ENCODE measurements at regions of chr14 and their contacts with region 1.

Region 1: DNA sequence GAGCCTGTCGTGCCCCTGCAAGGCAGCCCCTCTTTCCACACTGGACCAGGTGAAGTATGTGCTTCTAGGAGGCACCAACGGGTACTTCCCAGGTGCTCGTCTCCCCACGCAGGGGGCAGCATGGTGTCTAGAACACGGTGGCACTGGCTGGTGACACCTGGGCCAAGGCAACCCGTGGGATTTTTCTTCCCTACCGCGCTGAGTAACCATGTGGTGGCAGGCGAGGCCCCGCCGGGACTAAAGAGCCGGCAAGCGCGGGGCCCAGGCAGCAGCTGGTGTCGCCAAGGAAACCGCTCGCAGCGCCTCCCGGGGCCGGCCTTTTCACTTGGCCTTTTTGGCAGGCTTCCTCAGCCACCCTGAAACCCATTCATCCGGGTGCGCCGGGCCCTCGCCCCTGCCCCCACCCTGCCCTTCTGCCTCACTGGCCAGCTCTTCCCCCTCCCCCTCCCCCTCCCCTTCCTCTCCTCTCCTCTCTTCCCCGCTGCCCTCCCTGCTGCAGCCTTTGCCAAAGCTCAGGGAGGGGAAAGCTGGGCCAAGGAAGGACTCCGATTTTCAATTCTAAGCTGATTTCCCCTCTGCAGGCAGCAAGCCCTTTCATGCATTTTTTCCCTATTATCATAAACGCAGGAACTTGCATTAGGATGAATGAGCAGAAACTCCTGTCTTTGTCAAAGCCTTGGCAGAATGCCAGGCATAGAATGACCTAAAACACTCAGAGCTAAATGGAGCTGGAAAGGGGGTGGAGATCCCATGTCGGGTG is 81.2 kb downstream of the IRF2BPL start:
- DNase-seq: peak; percentile 98
- H3K4me3 ChIP-seq: peak overlapping the region; percentile 21
- H3K27ac ChIP-seq: peak overlapping the region; percentile 98
- H3K4me1 ChIP-seq: peaks cover 47% of the 10 kb centered on the region
- H3K27me3 ChIP-seq: no peaks in the 10 kb centered on the region
- CTCF ChIP-seq: peak; percentile 60

Region 2: DNA sequence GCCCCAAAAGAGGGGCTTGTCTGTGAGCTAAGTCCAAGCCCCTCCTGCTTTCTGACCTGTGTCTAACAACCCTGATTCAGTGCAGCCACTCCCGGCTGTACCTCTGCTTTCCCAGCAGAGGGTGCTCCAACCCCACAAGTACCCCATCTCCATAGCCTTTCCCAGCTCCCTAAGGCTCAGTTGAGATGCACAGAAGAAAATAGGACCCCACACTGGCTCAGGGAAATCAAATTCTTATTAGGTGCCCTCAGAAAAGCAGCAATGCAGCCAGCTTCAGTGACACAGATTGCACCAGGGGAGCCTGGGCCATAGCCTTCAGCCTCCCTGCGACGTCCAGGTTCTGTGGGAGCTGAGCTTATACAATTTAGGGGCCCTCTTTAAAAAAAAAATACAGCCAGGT is 71.2 kb before region 1 on chr14:
- CTCF ChIA-PET with region 1: no interaction called
- POLR2A ChIA-PET with region 1: no interaction called
- intact Hi-C with region 1: no loop called
- DNase-seq: peak; percentile 83
- H3K4me3 ChIP-seq: no peak overlapping the region
- H3K27ac ChIP-seq: no peak overlapping the region
- H3K4me1 ChIP-seq: no peaks in the 10 kb centered on the region
- H3K27me3 ChIP-seq: no peaks in the 10 kb centered on the region
- CTCF ChIP-seq: peak; percentile 96

Region 3: DNA sequence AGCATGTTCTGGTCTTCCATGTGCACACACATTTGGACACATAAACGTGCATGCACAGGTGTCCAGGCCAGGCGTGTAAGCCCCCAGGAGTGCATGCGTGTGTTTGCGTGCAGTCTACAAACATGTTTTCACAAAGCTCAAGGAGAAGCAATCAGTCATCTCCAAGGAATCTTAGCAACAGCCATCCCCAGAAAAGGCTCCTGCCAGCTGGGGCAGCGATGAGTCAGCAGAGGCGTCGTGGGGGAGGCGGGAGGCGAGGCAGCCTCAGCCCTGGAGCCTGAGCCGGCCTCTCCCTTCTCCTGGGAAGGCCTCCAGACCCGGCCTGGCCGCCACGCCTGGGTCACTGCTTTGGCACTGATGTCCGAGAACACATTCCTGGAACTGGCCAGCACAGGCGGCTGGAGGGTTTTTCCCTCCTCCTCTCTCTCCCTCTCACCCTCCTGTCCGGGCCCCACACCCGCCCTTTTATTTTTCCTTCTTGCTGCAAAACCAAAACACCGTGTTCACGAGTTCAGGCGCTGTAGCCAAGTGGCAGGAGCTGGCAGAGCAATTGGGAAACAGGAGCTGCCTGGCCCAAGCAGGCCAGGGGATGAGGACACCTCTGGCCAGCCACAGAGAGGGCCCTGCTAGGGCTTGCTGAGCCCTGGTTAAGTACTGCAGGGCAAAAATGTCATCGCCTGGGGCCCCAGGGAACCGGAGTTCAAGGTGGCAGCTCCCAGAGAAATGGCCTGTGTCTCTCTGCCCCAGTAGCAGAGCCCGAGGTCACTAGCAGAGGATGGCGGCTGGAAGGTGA is 28.3 kb before region 1 on chr14:
- CTCF ChIA-PET with region 1: interaction called, 7 read pairs
- POLR2A ChIA-PET with region 1: no interaction called
- intact Hi-C with region 1: loop called (anchors 2 kb)
- DNase-seq: peak; percentile 92
- H3K4me3 ChIP-seq: no peak overlapping the region
- H3K27ac ChIP-seq: peak overlapping the region; percentile 99
- H3K4me1 ChIP-seq: peaks cover 83% of the 10 kb centered on the region
- H3K27me3 ChIP-seq: no peaks in the 10 kb centered on the region
- CTCF ChIP-seq: no peak

Region 4: DNA sequence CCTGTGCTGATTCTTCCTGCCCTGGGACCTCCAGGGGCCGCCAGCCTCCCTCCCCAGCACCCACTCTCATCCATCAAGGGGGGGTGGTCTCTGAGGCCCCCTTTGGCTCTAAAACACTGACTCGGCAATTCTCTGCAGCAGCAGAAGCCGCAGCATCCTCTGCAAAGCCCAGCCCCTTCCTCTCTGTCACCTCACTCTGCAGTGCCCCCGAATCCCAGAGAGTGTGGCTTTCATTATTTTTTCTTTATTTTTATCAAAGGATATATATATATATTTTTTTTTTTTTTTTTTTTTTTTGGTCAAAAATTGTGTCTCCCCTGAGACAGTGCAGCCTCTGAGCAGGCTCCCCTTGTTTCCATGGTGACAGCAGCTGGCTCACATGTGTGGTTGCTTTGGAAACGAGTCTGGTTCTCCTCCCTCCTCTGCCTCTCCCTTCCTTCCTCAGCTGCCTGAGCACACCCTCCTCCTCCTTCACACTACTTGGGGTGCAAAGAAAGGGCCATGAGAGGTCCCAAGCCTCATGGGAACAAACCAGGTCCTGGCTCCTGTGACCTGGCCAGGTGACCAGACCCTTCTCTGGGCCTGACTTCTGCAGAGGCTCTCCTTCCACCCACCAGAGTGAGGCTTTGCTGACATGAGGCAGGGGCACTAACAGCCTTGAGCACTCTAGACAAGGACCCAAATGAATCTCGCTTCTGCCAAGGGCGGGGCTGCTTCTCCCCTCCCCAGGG is 20.6 kb before region 1 on chr14:
- CTCF ChIA-PET with region 1: interaction called, 4 read pairs
- POLR2A ChIA-PET with region 1: no interaction called
- intact Hi-C with region 1: loop called (anchors 1 kb)
- DNase-seq: peak; percentile 78
- H3K4me3 ChIP-seq: no peak overlapping the region
- H3K27ac ChIP-seq: no peak overlapping the region
- H3K4me1 ChIP-seq: peaks cover 52% of the 10 kb centered on the region
- H3K27me3 ChIP-seq: no peaks in the 10 kb centered on the region
- CTCF ChIP-seq: no peak

Region 5: DNA sequence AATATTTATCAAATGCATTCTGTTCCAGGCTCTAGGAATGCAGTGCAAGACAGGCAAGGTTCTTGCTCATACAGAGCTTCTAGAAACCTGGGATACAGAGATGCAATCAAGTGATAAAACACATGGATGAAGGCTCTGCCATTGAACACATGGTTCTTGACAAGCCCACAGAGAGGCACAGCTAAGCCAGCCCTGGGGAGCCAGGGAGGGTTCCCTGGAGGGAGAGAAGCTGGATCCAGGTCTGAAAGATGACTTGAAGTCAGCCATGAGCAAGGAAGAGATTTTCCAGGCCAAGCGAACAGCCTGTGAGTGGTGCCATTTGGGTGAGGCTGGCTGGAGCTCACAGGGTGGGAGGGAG is 15.0 kb after region 1 on chr14:
- CTCF ChIA-PET with region 1: interaction called, 10 read pairs
- POLR2A ChIA-PET with region 1: no interaction called
- intact Hi-C with region 1: no loop called
- DNase-seq: peak; percentile 51
- H3K4me3 ChIP-seq: peak overlapping the region; percentile 29
- H3K27ac ChIP-seq: peak overlapping the region; percentile 86
- H3K4me1 ChIP-seq: peaks cover 57% of the 10 kb centered on the region
- H3K27me3 ChIP-seq: no peaks in the 10 kb centered on the region
- CTCF ChIP-seq: no peak